ENCODE measurements at regions of chr3 and their contacts with region 1.

Region 1: DNA sequence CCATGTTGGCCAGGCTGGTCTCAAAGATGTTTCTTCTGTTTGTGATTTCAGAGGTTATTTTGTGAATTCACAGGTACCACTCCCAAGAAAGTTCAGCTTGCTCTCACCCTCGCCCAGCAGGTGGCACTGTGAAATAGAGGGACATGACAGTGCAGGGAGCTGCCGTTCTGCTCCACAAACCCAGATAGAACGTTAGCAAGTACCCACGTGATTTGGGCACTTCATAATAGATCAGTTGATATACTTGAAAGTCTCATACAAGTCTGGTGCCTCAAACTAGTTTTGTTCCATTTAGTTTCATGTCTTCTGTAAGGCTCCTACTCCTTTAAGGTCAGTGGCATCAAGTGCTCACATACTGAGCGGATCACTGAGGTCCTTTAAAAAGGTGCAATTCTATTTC is 45.5 kb downstream of the FILIP1L start:
- DNase-seq: peak; percentile 48
- H3K4me3 ChIP-seq: no peak overlapping the region
- H3K27ac ChIP-seq: no peak overlapping the region
- H3K4me1 ChIP-seq: peaks cover 3% of the 10 kb centered on the region
- H3K27me3 ChIP-seq: no peaks in the 10 kb centered on the region
- CTCF ChIP-seq: peak; percentile 60 to 68 (median 68)
- POLR2A ChIP-seq: no peak

Region 2: DNA sequence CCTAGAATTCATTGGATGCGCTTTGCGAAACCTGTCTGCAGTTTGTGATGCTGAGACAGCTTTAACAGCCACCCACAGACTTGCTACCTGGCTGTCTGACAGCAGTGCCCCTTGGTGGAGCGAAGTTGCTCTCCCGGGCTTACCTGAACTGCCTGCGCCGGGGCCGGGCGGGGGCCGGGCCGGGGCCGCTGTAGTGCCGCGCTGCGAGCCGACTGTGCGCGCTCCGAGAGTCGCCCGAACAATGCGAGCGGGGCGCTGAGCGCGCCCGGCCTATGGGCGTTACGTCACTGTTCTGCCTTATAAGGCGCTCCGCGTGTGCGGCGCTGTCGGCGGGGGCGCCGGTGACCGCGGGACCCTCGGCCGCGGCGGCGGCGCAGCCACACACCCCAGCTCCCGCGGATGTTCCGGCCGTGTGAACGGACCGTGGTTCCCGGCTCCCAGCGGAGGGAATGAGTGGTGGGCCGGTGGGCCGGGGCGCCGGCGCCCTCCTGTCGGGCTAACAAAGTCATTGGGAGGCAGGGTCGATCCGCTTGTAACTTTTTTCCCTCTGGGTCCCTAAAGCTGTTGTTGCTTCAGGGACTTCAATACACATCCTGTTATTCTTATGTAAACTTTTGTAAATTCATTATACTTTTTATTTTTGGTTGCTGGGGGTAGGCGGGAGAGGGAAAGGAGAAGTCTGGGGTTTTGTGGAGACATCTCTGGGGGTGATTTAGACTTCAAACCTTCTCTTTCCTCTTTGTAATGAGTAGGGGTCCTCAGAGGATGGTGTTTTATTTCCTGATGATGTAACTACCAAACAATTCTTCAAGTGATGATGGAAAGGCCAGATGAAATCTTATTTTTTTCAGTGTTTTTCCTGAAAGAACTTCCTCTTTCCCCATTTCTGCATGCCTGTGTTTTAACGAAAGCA is 192.6 kb before region 1 on chr3:
- intact Hi-C with region 1: no loop called
- DNase-seq: peak; percentile 63
- H3K4me3 ChIP-seq: peak overlapping the region; percentile 40 to 45
- H3K27ac ChIP-seq: peak overlapping the region; percentile 73 to 83
- H3K4me1 ChIP-seq: no peaks in the 10 kb centered on the region
- H3K27me3 ChIP-seq: no peaks in the 10 kb centered on the region
- CTCF ChIP-seq: no peak
- POLR2A ChIP-seq: peak; percentile 83

Region 3: DNA sequence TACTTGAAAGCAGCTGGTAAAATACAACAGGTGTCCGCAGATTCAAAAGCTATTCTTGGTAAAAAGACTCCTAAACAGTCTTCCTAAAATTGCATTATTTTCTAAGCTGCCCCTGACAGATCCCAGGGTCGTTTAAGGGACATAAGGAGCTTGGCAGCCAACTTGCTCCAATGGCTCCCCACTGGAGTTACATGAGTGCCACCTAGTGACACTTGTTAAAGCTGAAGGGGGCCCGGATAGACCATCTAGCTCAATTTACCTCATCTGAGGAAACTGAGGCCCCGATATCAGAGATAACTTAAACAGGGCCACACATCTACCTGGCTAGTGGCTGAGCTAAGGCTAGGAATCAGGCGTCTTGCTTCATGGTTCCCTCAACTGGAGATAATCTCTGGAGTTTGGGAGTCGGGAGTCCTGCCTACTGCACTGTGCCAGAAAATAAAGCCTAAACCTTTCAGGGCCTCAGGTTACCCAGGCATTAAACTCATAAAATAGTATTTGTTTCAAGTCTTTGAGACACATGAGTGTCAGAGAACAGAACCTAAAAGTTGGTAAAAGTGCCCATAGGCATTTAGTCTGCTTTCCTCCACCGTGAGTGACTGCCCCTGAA is 185.4 kb after region 1 on chr3:
- intact Hi-C with region 1: loop called (anchors 2 kb)
- DNase-seq: peak; percentile 23
- H3K4me3 ChIP-seq: no peak overlapping the region
- H3K27ac ChIP-seq: no peak overlapping the region
- H3K4me1 ChIP-seq: no peaks in the 10 kb centered on the region
- H3K27me3 ChIP-seq: no peaks in the 10 kb centered on the region
- CTCF ChIP-seq: peak; percentile 27 to 73 (median 56)
- POLR2A ChIP-seq: no peak